Activated CD8-positive, alpha-beta memory T cell treated with anti-CD3 and anti-CD28 coated beads, Interleukin-2, amount 10 ng/mL, durations not matched to agents 7 days and 5 days (primary cell): ENCODE measurements at regions of chr18 and their contacts with region 1.

Region 1: GRCh38 chr18:13813271-13813849 is 10.6 kb upstream of the MC5R start:
- DNase-seq: peak; percentile 72
- ATAC-seq: peak; percentile 82
- H3K4me3 Mint-ChIP-seq: no peak overlapping the region
- H3K27ac Mint-ChIP-seq: no peak overlapping the region
- H3K4me1 Mint-ChIP-seq: no peaks in the 10 kb centered on the region
- H3K27me3 Mint-ChIP-seq: peaks cover 23% of the 10 kb centered on the region

Region 2: GRCh38 chr18:13425462-13426133 is 387.8 kb before region 1 on chr18:
- CTCF ChIA-PET with region 1: no interaction called
- DNase-seq: peak; percentile 63
- ATAC-seq: peak; percentile 39
- H3K4me3 Mint-ChIP-seq: no peak overlapping the region
- H3K27ac Mint-ChIP-seq: no peak overlapping the region
- H3K4me1 Mint-ChIP-seq: peaks cover 31% of the 10 kb centered on the region
- H3K27me3 Mint-ChIP-seq: no peaks in the 10 kb centered on the region

Region 3: DNA sequence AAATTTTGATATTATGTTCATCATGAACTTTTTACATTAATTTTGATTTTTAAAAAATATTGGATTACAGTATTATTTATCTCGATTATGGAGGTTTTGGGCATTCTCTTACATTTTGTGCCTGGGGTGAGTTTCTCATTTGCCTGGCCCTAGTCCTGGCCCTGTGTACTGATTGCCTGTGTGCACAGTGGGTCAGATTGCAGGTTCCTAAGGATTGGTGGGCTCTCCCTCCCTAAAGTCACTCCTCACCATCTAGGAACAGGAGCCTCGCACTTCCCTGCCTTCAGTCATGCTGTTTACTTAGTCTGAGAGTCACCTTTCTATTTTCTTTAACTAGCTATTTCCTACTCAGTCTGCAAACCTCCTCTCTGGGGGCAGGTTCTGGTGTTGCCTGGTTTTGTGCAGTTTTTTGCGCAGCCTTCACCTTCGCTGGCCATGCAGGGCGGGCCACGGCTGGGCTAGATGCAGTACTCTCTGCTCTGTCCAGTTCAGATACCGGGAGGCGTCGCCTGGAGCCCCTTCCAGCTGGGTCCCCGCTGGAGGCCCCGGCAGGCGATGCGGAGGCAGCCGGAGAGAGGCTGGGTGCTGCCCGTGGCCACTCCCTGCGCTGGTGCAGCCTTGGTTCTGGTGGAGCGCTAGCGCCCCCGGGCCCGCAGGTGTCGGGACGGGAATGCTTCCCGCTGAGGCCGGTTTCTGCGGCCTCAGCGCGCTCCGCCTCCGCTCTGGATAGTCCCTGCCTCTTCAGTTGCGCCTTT is 12.7 kb before region 1 on chr18:
- CTCF ChIA-PET with region 1: interaction called, 13 read pairs
- DNase-seq: peak; percentile 64
- ATAC-seq: peak; percentile 90
- H3K4me3 Mint-ChIP-seq: no peak overlapping the region
- H3K27ac Mint-ChIP-seq: no peak overlapping the region
- H3K4me1 Mint-ChIP-seq: peaks cover 7% of the 10 kb centered on the region
- H3K27me3 Mint-ChIP-seq: peaks cover 69% of the 10 kb centered on the region

Region 4: DNA sequence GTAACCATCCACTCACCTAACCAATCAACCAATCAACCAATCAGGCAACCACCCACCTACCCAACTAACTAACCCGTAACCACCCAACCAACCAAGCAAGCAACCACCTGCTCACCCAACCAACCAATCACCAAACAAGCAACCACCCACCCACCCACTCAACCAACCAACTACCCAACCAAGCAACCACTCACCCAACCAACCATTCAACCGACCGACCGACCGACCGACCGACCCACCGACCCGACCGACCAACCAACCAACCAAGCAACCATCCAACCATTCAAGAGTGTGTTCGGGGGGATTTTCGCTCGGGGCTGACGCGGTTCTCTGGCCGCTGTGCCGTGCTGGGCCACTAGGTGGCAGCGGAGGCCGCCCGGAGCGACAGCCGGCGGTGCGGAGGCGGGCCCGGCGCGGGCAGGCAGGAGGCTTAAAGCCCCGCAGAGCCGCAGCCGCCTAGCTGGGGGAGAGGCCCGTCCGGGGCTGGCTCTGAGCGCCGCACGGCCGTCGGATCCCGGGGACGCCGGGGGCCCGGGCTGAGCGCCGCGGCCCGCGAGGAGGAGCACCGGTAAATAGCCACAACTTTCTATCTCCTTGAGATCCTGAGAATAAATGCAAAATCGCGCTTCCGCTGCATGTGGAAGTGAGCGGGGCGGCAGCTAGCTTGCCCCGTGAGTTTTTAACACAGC is 10.5 kb after region 1 on chr18 and contains the start of gene MC5R:
- CTCF ChIA-PET with region 1: interaction called, 15 read pairs
- DNase-seq: peak; percentile 76
- ATAC-seq: peak; percentile 97
- H3K4me3 Mint-ChIP-seq: no peak within 1 kb of the TSS
- H3K27ac Mint-ChIP-seq: no peak within 1 kb of the TSS
- H3K4me1 Mint-ChIP-seq: peaks cover 6% of the 10 kb centered on the region
- H3K27me3 Mint-ChIP-seq: peaks cover 30% of the 10 kb centered on the region
- total RNA-seq, gene MC5R: 0.12 TPM in 1 of 2 experiments, not detected in the other

Region 5: DNA sequence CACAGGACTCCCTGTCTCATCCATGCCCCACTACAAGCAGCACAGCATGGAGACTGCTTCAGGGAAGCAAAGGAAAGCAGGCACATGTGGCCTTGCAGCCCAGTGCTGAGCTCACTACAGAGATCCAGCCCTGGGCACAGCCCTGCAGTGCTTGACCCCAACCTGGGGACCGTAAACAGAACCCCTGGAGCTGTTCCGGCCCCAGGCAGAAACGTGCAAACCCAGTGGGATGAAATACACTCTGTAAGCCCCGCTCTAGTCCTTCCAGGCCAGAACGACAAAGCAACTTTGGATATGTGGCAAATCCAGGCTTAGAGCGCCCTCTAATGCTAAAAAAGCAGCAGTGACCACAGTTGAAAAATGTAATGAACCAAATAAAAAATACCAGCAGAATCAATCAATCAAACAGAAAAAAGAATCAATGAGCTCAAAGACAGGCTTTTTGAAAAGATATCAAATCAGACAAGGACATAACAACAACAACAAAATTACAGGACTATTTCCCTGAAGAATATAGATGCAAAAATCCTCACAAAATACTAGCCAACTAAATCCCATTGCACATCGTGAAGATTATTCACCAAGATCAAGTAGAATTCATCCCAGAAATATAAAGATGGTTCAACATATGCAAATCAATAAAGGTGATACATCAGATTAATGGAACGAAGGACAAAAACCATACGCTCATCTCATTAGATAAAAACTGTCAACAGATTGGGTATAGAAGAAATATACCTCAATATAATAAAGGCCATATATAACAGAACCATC is 273.3 kb after region 1 on chr18:
- CTCF ChIA-PET with region 1: interaction called, 21 read pairs
- DNase-seq: no peak
- ATAC-seq: peak; percentile 55
- H3K4me3 Mint-ChIP-seq: no peak overlapping the region
- H3K27ac Mint-ChIP-seq: no peak overlapping the region
- H3K4me1 Mint-ChIP-seq: no peaks in the 10 kb centered on the region
- H3K27me3 Mint-ChIP-seq: no peaks in the 10 kb centered on the region